Activated B cell treated with CpG ODN at 0.5 μM for 24 hours (primary cell): ENCODE measurements at regions of chr7 and their contacts with region 1.

Region 1: DNA sequence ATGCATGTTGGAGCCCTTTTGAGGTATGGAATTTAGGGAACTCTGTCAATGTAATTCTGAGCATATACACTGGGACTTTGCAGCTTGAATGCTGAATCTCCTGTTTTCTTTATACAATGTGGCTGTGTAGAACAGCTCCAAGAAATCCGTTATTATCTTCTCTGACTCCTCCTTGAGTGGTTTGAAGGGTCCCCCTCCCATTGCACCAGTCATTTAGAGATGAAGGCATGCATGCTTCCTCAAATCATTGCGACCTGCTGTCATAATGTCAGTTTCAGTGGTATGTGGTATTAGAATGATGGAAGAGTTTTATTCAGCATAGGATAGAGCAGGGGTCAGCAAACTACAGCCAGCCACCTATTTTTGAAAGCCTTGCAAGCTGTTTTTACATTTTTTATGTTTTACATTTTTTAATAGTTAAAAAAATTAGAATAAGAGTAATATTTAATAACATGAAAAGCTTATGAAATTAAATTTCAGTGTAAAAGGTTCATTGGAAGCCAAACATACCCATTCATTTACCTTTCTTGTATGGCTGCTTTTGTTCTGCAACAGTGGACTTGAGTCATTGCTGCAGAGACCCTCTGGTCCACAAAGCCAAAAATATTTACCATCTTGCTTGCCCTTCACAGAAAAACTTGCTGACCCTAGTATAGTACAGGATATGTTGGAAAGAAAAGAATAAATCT is 8.1 kb downstream of the STK17A start:
- DNase-seq: no peak
- ATAC-seq: peak; percentile 72
- H3K4me3 Mint-ChIP-seq: peak overlapping the region; percentile 50
- H3K27ac Mint-ChIP-seq: peak overlapping the region; percentile 81
- H3K4me1 Mint-ChIP-seq: peaks cover 89% of the 10 kb centered on the region
- H3K27me3 Mint-ChIP-seq: no peaks in the 10 kb centered on the region
- CTCF ChIP-seq: no peak

Region 2: GRCh38 chr7:43576241-43576640 is 14.8 kb before region 1 on chr7:
- CTCF ChIA-PET with region 1: no interaction called
- POLR2A ChIA-PET with region 1: no interaction called
- intact Hi-C with region 1: no loop called
- DNase-seq: no peak
- ATAC-seq: no peak
- H3K4me3 Mint-ChIP-seq: no peak overlapping the region
- H3K27ac Mint-ChIP-seq: no peak overlapping the region
- H3K4me1 Mint-ChIP-seq: no peaks in the 10 kb centered on the region
- H3K27me3 Mint-ChIP-seq: no peaks in the 10 kb centered on the region
- CTCF ChIP-seq: no peak

Region 3: DNA sequence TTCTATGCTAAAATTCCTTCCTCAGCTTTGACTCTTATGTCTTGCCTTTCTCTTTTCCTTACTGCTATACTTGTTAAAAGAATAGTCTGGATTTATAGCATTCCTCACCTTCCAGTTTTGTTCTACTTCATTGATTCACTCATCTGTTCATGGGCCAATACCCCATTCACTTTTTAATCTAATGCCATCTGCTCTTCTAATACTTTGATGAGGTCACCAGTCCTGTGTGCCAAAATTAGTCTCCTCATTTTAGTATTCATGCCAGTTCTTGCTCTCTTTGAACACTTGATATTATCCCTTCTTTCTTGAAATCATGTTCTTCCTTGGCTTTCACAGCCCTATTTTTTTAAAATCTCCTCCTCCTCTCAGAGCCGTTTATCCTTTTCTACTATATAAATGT is 11.3 kb after region 1 on chr7:
- CTCF ChIA-PET with region 1: interaction called, 3 read pairs
- POLR2A ChIA-PET with region 1: interaction called, 5 read pairs
- intact Hi-C with region 1: loop called (anchors 1 kb)
- DNase-seq: no peak
- ATAC-seq: no peak
- H3K4me3 Mint-ChIP-seq: no peak overlapping the region
- H3K27ac Mint-ChIP-seq: no peak overlapping the region
- H3K4me1 Mint-ChIP-seq: peaks cover 38% of the 10 kb centered on the region
- H3K27me3 Mint-ChIP-seq: no peaks in the 10 kb centered on the region
- CTCF ChIP-seq: no peak

Region 4: GRCh38 chr7:43612599-43613589 is 21.9 kb after region 1 on chr7:
- CTCF ChIA-PET with region 1: no interaction called
- POLR2A ChIA-PET with region 1: interaction called, 9 read pairs
- intact Hi-C with region 1: loop called (anchors 2 kb)
- DNase-seq: no peak
- ATAC-seq: peak; percentile 58
- H3K4me3 Mint-ChIP-seq: peak overlapping the region; percentile 49
- H3K27ac Mint-ChIP-seq: peak overlapping the region; percentile 86
- H3K4me1 Mint-ChIP-seq: peaks cover 60% of the 10 kb centered on the region
- H3K27me3 Mint-ChIP-seq: no peaks in the 10 kb centered on the region
- CTCF ChIP-seq: no peak

Region 5: DNA sequence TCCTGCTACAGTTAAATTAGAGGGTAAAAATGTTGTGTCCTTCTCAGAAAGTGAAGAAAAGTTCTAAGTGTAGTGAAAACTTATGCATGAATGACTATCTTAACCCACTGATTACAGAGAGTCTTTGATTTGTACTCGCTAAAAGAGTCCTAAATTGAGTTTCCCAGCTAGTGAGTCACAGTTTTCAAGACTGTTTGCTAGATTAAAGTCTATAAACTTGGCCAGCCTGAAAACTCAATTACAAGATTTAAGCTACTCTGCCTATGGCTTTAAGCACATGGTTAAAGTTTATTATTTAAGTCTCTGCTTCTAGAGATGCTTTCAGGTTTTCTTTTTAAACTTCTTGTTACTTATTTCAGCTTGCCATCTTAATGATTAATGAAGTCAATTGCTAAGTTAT is 234.0 kb after region 1 on chr7:
- CTCF ChIA-PET with region 1: no interaction called
- POLR2A ChIA-PET with region 1: no interaction called
- intact Hi-C with region 1: no loop called
- DNase-seq: no peak
- ATAC-seq: no peak
- H3K4me3 Mint-ChIP-seq: no peak overlapping the region
- H3K27ac Mint-ChIP-seq: no peak overlapping the region
- H3K4me1 Mint-ChIP-seq: no peaks in the 10 kb centered on the region
- H3K27me3 Mint-ChIP-seq: peaks cover 26% of the 10 kb centered on the region
- CTCF ChIP-seq: no peak